Activated CD8-positive, alpha-beta T cell treated with anti-CD3 and anti-CD28 coated beads, Interleukin-2, amount 10 ng/mL, durations not matched to agents 7 days and 5 days (primary cell): ENCODE measurements at regions of chr11 and their contacts with region 1.

Region 1: GRCh38 chr11:128290106-128290840 is 297.1 kb downstream of the ETS1 start:
- DNase-seq: peak; percentile 87
- ATAC-seq: peak; percentile 76
- H3K4me3 Mint-ChIP-seq: peak overlapping the region; percentile 96
- H3K27ac Mint-ChIP-seq: peak overlapping the region; percentile 84
- H3K4me1 Mint-ChIP-seq: peaks cover 90% of the 10 kb centered on the region
- H3K27me3 Mint-ChIP-seq: no peaks in the 10 kb centered on the region

Region 2: DNA sequence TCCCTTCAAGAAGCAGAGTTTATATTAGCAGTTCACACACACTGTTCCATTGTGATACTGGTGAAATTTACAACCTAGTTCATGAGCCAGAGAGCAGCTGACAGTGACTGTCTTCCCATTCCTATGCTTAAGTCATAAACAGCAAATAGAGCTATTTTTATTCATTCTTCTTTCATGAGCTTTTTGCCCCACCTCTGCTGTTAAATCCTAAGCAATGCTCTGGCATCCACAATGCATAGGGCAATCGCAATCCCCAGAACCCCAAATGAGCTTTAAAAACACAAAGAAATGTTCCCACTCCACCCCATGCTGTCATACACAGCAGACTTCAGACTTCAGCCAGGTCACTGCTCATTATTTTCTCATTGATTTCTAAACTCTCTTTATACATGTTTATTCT is 10.4 kb before region 1 on chr11:
- CTCF ChIA-PET with region 1: interaction called, 13 read pairs
- POLR2A ChIA-PET with region 1: no interaction called
- DNase-seq: no peak
- ATAC-seq: no peak
- H3K4me3 Mint-ChIP-seq: no peak overlapping the region
- H3K27ac Mint-ChIP-seq: no peak overlapping the region
- H3K4me1 Mint-ChIP-seq: peaks cover 3% of the 10 kb centered on the region
- H3K27me3 Mint-ChIP-seq: peaks cover 7% of the 10 kb centered on the region

Region 3: DNA sequence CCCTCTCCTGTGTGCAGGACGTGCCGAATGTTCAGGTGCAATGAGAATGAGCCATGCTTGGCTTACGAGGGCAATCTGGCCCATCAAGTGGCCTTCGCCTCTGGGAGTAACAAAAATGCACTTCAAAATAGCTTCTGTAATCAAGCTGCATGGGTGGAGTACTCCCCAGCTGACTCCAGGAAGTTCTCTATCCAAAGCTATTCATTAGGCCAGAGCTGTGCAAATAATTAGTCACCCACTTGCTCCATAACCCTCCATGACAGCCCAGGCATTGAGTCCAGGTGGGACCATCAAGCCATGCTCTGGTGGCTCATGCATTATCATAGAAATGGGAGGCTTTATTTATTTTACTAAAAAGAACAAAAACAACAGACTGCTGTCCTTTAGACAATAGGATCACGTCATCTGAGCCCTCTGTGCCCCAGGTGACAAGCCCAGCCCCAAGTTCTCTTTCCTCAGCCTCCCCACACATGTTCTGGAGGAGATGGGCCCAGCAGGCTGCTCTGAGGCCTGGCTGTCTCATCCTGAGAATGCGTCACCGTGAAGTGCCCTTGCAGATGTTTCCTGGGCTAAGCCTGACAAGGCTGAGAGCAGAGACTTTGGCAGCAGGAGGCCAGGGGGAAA is 52.4 kb after region 1 on chr11:
- CTCF ChIA-PET with region 1: interaction called, 10 read pairs
- POLR2A ChIA-PET with region 1: interaction called, 4 read pairs
- DNase-seq: peak; percentile 61
- ATAC-seq: peak; percentile 62
- H3K4me3 Mint-ChIP-seq: peak overlapping the region; percentile 7
- H3K27ac Mint-ChIP-seq: peak overlapping the region; percentile 96
- H3K4me1 Mint-ChIP-seq: peaks cover 70% of the 10 kb centered on the region
- H3K27me3 Mint-ChIP-seq: no peaks in the 10 kb centered on the region

Region 4: GRCh38 chr11:128463371-128463829 is 173.1 kb after region 1 on chr11:
- CTCF ChIA-PET with region 1: interaction called, 38 read pairs
- POLR2A ChIA-PET with region 1: interaction called, 17 read pairs
- DNase-seq: no peak
- ATAC-seq: no peak
- H3K4me3 Mint-ChIP-seq: no peak overlapping the region
- H3K27ac Mint-ChIP-seq: peak overlapping the region; percentile 91
- H3K4me1 Mint-ChIP-seq: peaks cover 87% of the 10 kb centered on the region
- H3K27me3 Mint-ChIP-seq: no peaks in the 10 kb centered on the region

Region 5: GRCh38 chr11:128497061-128497775 is 206.9 kb after region 1 on chr11:
- CTCF ChIA-PET with region 1: interaction called, 7 read pairs
- POLR2A ChIA-PET with region 1: interaction called, 14 read pairs
- DNase-seq: no peak
- ATAC-seq: no peak
- H3K4me3 Mint-ChIP-seq: peak overlapping the region; percentile 73
- H3K27ac Mint-ChIP-seq: peak overlapping the region; percentile 81
- H3K4me1 Mint-ChIP-seq: peaks cover 95% of the 10 kb centered on the region
- H3K27me3 Mint-ChIP-seq: no peaks in the 10 kb centered on the region

Region 6: GRCh38 chr11:128522055-128522942 is 232.0 kb after region 1 on chr11:
- CTCF ChIA-PET with region 1: interaction called, 49 read pairs
- POLR2A ChIA-PET with region 1: interaction called, 184 read pairs
- DNase-seq: peak; percentile 94
- ATAC-seq: peak; percentile 78
- H3K4me3 Mint-ChIP-seq: peak overlapping the region; percentile 96
- H3K27ac Mint-ChIP-seq: peak overlapping the region; percentile 92
- H3K4me1 Mint-ChIP-seq: peaks cover 44% of the 10 kb centered on the region
- H3K27me3 Mint-ChIP-seq: no peaks in the 10 kb centered on the region